ENCODE measurements at regions of chr4 and their contacts with region 1.

Region 1: GRCh38 chr4:148056869-148057268 is 325.0 kb downstream of the ARHGAP10 start:
- DNase-seq: peak; percentile 30 to 80 (median 73)
- ATAC-seq: peak; percentile 59
- H3K4me3 ChIP-seq: no peak overlapping the region
- H3K4me3 Mint-ChIP-seq: peak overlapping the region; percentile 33
- H3K27ac ChIP-seq: peak overlapping the region in 1 of 2 experiments; percentile 32
- H3K27ac Mint-ChIP-seq: peak overlapping the region; percentile 94
- H3K4me1 ChIP-seq: peaks cover 94% of the 10 kb centered on the region
- H3K4me1 Mint-ChIP-seq: peaks cover 93% of the 10 kb centered on the region
- H3K27me3 ChIP-seq: no peaks in the 10 kb centered on the region
- H3K27me3 Mint-ChIP-seq: no peaks in the 10 kb centered on the region
- CTCF ChIP-seq: no peak

Region 2: DNA sequence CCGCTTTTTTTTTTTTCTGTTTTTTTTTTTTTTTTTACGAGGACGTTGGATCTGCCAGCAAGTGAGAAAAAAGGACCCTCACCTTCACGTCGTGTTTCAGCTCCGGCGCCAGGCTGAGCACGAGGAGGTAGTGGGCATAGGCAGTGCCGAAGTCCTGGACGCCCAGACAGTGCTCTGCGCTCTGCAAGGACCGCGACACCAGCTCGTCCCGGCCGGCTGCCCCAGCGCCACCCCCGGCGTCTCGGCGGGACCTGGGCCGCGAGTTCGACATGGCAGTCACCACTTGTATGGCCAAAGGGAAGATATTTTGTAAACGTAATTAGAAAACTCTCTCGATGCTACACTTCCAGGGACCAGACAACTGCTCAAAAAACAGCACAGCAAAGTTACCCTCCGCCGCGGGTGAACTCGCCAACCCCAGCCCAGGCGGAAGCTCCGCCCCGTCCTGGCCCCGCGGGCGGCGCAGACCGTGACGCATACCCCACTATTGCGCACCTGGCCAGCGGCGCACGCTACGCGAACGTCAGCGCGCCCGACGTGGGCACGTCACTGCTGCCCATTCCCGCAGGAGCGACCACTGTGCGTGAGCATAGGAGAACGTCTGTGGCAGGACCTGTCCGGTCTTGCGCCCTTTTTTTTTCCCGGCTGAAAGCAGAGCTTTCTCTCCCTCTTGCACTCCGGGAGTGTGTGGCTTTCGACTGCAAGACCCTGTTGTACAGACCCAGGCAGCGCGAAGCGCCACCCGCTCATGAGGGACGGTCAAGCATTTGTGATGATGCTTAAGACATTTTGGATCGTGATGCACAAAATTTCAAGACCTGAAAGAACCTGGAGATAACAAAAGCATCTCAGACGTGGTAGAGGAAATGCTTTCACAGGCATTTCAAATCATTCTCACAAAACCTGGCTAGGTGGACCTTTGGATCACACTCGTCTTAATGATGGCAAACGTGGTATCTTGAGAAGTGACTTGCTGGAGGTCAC is 372.9 kb before region 1 on chr4 and contains the start of gene PRMT9:
- CTCF ChIA-PET with region 1: no interaction called
- POLR2A ChIA-PET with region 1: no interaction called
- intact Hi-C with region 1: loop called in 1 of 2 experiments (anchors 5 kb)
- DNase-seq: peak; percentile 74 to 94 (median 88)
- ATAC-seq: peak; percentile 97
- H3K4me3 ChIP-seq: peak within 1 kb of the TSS; percentile 68 to 98
- H3K4me3 Mint-ChIP-seq: peak within 1 kb of the TSS; percentile 98
- H3K27ac ChIP-seq: peak within 1 kb of the TSS; percentile 92 to 98
- H3K27ac Mint-ChIP-seq: peak within 1 kb of the TSS; percentile 99
- H3K4me1 ChIP-seq: peaks cover 11% of the 10 kb centered on the region
- H3K4me1 Mint-ChIP-seq: peaks cover 40% of the 10 kb centered on the region
- H3K27me3 ChIP-seq: no peaks in the 10 kb centered on the region
- H3K27me3 Mint-ChIP-seq: peaks cover 8% of the 10 kb centered on the region
- CTCF ChIP-seq: no peak
- total RNA-seq, gene PRMT9: 36.4 to 40.3 TPM

Region 3: GRCh38 chr4:147960971-147961370 is 95.9 kb before region 1 on chr4:
- CTCF ChIA-PET with region 1: no interaction called
- POLR2A ChIA-PET with region 1: no interaction called
- intact Hi-C with region 1: no loop called
- DNase-seq: no peak
- ATAC-seq: no peak
- H3K4me3 ChIP-seq: no peak overlapping the region
- H3K4me3 Mint-ChIP-seq: no peak overlapping the region
- H3K27ac ChIP-seq: no peak overlapping the region
- H3K27ac Mint-ChIP-seq: no peak overlapping the region
- H3K4me1 ChIP-seq: no peaks in the 10 kb centered on the region
- H3K4me1 Mint-ChIP-seq: no peaks in the 10 kb centered on the region
- H3K27me3 ChIP-seq: no peaks in the 10 kb centered on the region
- H3K27me3 Mint-ChIP-seq: no peaks in the 10 kb centered on the region
- CTCF ChIP-seq: no peak

Region 4: DNA sequence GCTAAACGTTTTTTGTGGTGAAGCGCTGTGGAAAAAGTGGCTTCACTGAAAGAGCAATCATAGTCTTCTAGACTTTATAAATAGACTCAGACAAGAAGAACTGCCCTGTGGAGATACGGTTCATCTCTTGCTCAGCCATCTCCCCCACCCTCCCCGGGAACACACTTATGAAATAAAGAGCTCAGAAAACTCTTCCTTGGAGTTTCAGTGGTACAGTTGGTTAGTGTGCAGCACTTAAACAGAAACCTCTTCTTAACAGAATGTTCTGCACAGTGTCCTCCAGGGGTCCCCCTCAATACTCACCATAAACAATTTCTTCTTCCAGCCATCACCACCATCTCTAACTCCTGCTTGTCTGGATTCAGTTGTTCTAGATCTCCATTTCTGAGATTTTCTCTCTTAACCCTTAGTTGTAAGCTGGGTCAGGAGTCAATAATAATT is 11.9 kb before region 1 on chr4:
- CTCF ChIA-PET with region 1: interaction called, 17 read pairs
- POLR2A ChIA-PET with region 1: interaction called, 12 read pairs
- intact Hi-C with region 1: no loop called
- DNase-seq: peak in 2 of 9 experiments; percentile 51 to 60
- ATAC-seq: peak; percentile 72
- H3K4me3 ChIP-seq: no peak overlapping the region
- H3K4me3 Mint-ChIP-seq: no peak overlapping the region
- H3K27ac ChIP-seq: no peak overlapping the region
- H3K27ac Mint-ChIP-seq: no peak overlapping the region
- H3K4me1 ChIP-seq: peaks cover 8% of the 10 kb centered on the region
- H3K4me1 Mint-ChIP-seq: peaks cover 31% of the 10 kb centered on the region
- H3K27me3 ChIP-seq: no peaks in the 10 kb centered on the region
- H3K27me3 Mint-ChIP-seq: no peaks in the 10 kb centered on the region
- CTCF ChIP-seq: peak; percentile 32

Region 5: DNA sequence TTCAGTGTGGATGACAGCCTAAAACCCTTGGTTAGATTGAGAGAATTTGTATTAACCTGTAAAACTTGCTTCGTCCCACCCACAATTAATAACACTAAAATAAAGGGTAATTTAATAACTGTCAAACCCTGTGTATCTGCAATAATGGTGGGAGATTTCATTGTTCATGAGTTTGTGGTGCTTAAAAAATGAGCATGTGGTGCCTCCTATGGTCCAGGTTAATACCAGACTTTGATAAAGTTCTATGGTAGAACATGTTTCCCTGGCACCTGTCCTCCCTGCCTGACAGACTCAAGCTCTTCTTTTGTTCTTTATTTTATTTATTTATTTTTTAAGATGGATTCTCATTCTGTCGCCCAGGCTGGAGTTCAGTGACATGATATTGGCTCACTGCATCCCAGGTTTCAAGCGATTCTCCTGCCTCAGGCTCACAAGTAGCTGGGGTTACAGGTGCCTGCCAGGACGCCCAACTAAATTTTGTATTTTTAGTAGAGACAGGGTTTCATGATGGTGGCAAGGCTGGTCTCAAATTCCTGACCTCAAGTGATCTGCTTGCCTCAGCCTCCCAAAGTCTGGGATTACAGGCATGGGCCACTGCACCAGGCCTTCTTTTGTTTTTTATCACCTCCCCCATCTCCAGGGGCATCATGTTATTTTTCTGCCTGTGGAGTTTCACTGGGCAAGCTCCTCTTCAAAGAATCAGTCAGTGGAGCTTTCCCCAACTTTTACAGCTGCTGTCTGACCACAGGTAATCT is 96.2 kb after region 1 on chr4:
- CTCF ChIA-PET with region 1: interaction called, 3 read pairs
- POLR2A ChIA-PET with region 1: no interaction called
- intact Hi-C with region 1: loop called in 1 of 2 experiments (anchors 5 kb)
- DNase-seq: peak in 1 of 9 experiments; percentile 19
- ATAC-seq: no peak
- H3K4me3 ChIP-seq: no peak overlapping the region
- H3K4me3 Mint-ChIP-seq: no peak overlapping the region
- H3K27ac ChIP-seq: no peak overlapping the region
- H3K27ac Mint-ChIP-seq: no peak overlapping the region
- H3K4me1 ChIP-seq: no peaks in the 10 kb centered on the region
- H3K4me1 Mint-ChIP-seq: peaks cover 2% of the 10 kb centered on the region
- H3K27me3 ChIP-seq: no peaks in the 10 kb centered on the region
- H3K27me3 Mint-ChIP-seq: no peaks in the 10 kb centered on the region
- CTCF ChIP-seq: no peak

Region 6: DNA sequence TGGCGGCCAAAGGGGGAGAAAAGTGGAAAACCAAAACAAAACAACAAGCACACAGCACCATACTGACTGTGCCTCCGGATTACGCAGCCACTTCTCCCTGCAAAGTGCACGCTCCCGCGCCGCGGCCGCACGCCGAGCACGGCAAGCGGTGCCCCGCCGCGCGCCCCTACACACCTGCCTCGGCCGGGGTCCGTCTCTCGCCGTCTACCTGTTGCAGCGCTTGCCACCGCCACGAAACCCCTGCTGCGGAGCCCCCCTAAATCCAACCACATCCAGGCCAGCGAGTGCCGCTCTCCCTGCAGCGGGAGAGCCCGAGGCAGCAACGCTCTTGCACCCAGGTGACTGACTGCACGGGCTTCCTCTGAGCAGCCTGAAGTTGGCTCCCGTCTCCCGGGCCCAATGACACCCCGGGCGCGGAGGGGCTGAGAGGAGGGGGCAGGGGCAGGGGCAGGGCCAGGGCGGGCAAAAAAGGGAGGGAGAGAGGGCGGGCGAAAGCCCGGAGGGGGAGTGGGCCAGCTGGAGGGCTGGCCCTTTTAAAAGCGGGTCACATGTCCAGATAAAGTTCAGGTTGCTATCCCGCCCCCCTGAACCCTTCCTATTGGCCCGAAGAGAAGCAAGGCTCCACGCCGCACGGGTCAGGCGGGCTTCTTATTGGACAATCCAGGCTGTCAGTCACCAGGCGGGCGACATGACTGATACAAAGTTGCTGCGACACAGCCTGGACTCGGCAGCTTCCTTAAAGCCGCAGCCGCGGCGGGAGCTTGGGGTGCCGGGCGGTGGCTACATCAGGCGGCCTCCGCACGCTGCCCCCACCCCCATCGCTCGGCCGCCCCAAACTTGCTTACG is 385.3 kb after region 1 on chr4 and contains the start of gene NR3C2:
- CTCF ChIA-PET with region 1: interaction called, 5 read pairs
- POLR2A ChIA-PET with region 1: interaction called, 93 read pairs
- intact Hi-C with region 1: loop called (anchors 2 to 5 kb)
- DNase-seq: peak; percentile 95 to 99 (median 97)
- ATAC-seq: peak; percentile 74
- H3K4me3 ChIP-seq: peak within 1 kb of the TSS; percentile 95
- H3K4me3 Mint-ChIP-seq: peak within 1 kb of the TSS; percentile 98
- H3K27ac ChIP-seq: peak within 1 kb of the TSS; percentile 93 to 99
- H3K27ac Mint-ChIP-seq: peak within 1 kb of the TSS; percentile 99
- H3K4me1 ChIP-seq: peaks cover 48% of the 10 kb centered on the region
- H3K4me1 Mint-ChIP-seq: peaks cover 53% of the 10 kb centered on the region
- H3K27me3 ChIP-seq: no peaks in the 10 kb centered on the region
- H3K27me3 Mint-ChIP-seq: no peaks in the 10 kb centered on the region
- CTCF ChIP-seq: no peak
- total RNA-seq, gene NR3C2: 29.6 to 32.4 TPM